Activated CD4-positive, alpha-beta T cell treated with anti-CD3 and anti-CD28 coated beads, Interleukin-2, amount 10 ng/mL, durations not matched to agents 24 days and 14 days (primary cell): ENCODE measurements at regions of chr6 and their contacts with region 1.

Region 1: GRCh38 chr6:136751522-136751956 is 40.7 kb downstream of the MAP3K5 start:
- DNase-seq: peak; percentile 86
- H3K4me3 Mint-ChIP-seq: peak overlapping the region; percentile 74
- H3K27ac Mint-ChIP-seq: peak overlapping the region; percentile 90
- H3K4me1 Mint-ChIP-seq: peaks cover 75% of the 10 kb centered on the region
- H3K27me3 Mint-ChIP-seq: no peaks in the 10 kb centered on the region

Region 2: DNA sequence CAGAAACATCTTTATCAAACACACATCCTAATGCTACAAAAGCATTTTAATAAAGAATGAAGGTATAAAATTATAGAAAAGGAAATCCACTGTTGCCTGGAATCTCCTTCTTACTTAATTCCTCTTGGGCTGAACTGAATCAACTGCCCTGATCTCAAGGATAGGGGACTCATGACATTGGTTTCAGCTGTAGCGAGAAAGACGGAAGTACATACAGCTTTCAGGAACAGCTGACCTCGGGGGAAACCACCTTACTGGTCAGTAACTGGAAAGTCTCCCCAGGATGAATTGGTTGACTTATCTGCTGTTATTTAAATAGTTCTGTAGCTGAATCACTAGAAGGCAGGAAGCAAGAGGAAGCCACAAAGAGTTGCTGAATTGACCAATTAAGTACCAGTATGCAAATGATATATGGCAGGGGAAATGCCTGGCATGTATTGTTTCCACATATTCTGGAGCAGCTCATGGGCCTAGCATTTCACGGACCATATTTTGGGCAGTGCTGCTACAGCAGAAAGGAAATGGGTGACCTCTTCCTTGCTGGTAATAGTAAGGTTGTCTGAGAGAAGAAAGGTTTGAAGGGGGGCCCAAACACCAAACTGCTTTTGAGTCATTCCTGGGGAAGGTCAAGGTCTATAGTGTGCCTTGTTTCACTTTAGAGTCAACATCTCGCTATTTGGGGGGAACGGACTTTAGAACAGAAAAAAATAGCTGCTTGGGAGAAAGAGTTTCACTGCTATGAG is 157.6 kb before region 1 on chr6:
- intact Hi-C with region 1: loop called (anchors 1 kb)
- DNase-seq: peak; percentile 83
- H3K4me3 Mint-ChIP-seq: peak overlapping the region; percentile 73
- H3K27ac Mint-ChIP-seq: peak overlapping the region; percentile 96
- H3K4me1 Mint-ChIP-seq: peaks cover 35% of the 10 kb centered on the region
- H3K27me3 Mint-ChIP-seq: no peaks in the 10 kb centered on the region

Region 3: GRCh38 chr6:136719280-136720044 is 32.1 kb before region 1 on chr6:
- intact Hi-C with region 1: loop called (anchors 1 kb)
- DNase-seq: peak; percentile 64
- H3K4me3 Mint-ChIP-seq: peak overlapping the region; percentile 63
- H3K27ac Mint-ChIP-seq: peak overlapping the region; percentile 55
- H3K4me1 Mint-ChIP-seq: peaks cover 43% of the 10 kb centered on the region
- H3K27me3 Mint-ChIP-seq: no peaks in the 10 kb centered on the region

Region 4: GRCh38 chr6:136729832-136730231 is 21.7 kb before region 1 on chr6:
- intact Hi-C with region 1: loop called (anchors 2 kb)
- DNase-seq: no peak
- H3K4me3 Mint-ChIP-seq: no peak overlapping the region
- H3K27ac Mint-ChIP-seq: no peak overlapping the region
- H3K4me1 Mint-ChIP-seq: peaks cover 27% of the 10 kb centered on the region
- H3K27me3 Mint-ChIP-seq: no peaks in the 10 kb centered on the region

Region 5: GRCh38 chr6:136764517-136764993 is 13.0 kb after region 1 on chr6:
- intact Hi-C with region 1: loop called (anchors 1 kb)
- DNase-seq: peak; percentile 71
- H3K4me3 Mint-ChIP-seq: peak overlapping the region; percentile 48
- H3K27ac Mint-ChIP-seq: peak overlapping the region; percentile 59
- H3K4me1 Mint-ChIP-seq: peaks cover 70% of the 10 kb centered on the region
- H3K27me3 Mint-ChIP-seq: no peaks in the 10 kb centered on the region